SK-N-SH (cell line): ENCODE measurements at regions of chr7 and their contacts with region 1.

Region 1: DNA sequence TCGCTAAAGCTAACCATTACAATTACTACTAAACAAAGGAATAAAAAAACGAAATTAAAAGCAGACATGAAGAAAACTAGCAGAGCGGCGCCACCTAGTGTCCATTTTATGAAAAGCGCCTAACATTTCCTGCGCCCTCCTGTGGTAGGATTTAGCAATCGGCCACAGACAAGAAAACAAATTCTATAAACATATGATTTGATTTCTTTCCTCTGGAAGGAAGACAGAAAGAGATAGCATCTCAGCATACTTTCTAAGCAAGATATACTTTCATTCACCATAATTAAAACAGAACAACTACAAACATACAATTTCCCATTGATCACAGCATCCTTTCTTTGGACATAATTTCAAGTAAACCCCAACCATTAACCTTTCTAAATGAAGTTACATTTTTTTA is 337.7 kb upstream of the NPVF start:
- DNase-seq: peak; percentile 54
- H3K4me3 ChIP-seq: peak overlapping the region in 1 of 2 experiments; percentile 28; a peak in 1 of 4 replicates
- H3K27ac ChIP-seq: no peak overlapping the region
- H3K4me1 ChIP-seq: peaks cover 0 to 19% of the 10 kb centered on the region in 2 experiments; a peak in 2 of 4 replicates
- H3K27me3 ChIP-seq: no peaks in the 10 kb centered on the region
- CTCF ChIP-seq: peak; percentile 100
- EP300 ChIP-seq: no peak; a peak in 1 of 4 replicates
- RAD21 ChIP-seq: peak; percentile 100

Region 2: DNA sequence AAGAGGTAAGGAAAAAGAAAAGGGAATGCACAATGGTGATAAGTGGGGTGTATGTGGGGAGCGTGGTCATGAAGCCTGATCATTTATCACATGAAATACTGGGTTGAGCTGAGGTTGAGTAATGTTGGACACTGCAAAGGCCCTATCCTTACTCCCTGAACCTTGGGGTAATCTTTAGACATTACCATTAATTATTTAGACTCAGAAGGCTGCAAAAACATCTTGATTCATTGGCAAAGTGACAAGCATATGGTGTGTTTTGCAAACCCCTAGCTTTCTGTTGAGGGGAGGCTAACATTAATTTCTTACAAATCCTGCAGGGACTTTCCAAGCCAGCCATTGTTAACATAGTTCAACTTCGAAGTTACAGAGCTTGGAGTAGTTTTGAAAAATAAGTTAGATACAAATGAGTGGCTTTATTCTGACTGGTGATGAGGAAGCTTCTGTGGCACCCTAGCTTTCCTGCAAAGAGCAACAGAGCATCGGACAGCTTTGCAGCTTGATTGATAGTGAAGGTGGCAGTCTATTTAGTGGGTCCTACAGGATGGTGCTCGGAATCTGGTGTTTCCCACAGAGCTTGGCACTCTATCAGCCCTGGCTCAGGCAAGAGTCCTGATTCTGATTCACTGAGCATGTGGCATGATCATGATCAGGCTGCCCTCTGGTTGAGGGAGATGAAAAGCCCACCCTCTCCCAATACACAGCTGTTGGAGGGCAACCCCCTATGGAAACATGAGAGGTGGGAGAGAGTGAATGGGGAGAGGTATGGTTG is 183.9 kb before region 1 on chr7:
- CTCF ChIA-PET with region 1: interaction called, 766 read pairs
- POLR2A ChIA-PET with region 1: no interaction called
- DNase-seq: no peak
- H3K4me3 ChIP-seq: no peak overlapping the region
- H3K27ac ChIP-seq: no peak overlapping the region
- H3K4me1 ChIP-seq: peaks cover 0 to 10% of the 10 kb centered on the region in 2 experiments; a peak in 1 of 4 replicates
- H3K27me3 ChIP-seq: no peaks in the 10 kb centered on the region
- CTCF ChIP-seq: no peak
- EP300 ChIP-seq: no peak
- RAD21 ChIP-seq: no peak

Region 3: GRCh38 chr7:25424113-25424512 is 141.8 kb before region 1 on chr7:
- CTCF ChIA-PET with region 1: interaction called, 41 read pairs
- POLR2A ChIA-PET with region 1: no interaction called
- DNase-seq: no peak
- H3K4me3 ChIP-seq: no peak overlapping the region
- H3K27ac ChIP-seq: no peak overlapping the region
- H3K4me1 ChIP-seq: peaks cover 0 to 2% of the 10 kb centered on the region in 2 experiments; a peak in 1 of 4 replicates
- H3K27me3 ChIP-seq: no peaks in the 10 kb centered on the region
- CTCF ChIP-seq: no peak
- EP300 ChIP-seq: no peak
- RAD21 ChIP-seq: no peak

Region 4: GRCh38 chr7:25545124-25546008 is 20.6 kb before region 1 on chr7:
- CTCF ChIA-PET with region 1: interaction called, 110 read pairs
- POLR2A ChIA-PET with region 1: no interaction called
- DNase-seq: peak; percentile 65
- H3K4me3 ChIP-seq: no peak overlapping the region
- H3K27ac ChIP-seq: peak overlapping the region in 1 of 2 experiments; percentile 28; a peak in 2 of 4 replicates
- H3K4me1 ChIP-seq: peaks cover 0 to 15% of the 10 kb centered on the region in 2 experiments; a peak in 1 of 4 replicates
- H3K27me3 ChIP-seq: no peaks in the 10 kb centered on the region
- CTCF ChIP-seq: no peak
- EP300 ChIP-seq: no peak
- RAD21 ChIP-seq: no peak

Region 5: DNA sequence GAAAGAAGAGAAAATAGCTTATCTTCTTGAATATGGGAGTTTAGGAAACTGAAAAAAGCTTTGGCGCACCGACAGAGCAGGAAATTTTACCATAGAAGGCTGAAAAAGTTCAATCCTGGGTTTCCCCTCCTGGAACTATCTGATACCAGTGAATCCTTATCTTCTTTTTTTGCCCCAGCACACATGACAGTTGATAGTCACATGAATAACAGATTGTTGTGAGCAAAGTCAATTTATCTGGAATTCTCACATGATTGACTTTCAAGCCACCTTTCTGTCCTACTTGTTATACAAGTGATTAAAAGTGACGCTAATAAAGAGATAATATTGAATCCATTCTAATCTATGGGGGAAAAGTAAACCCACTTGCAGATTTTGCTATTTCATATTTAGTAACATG is 28.2 kb after region 1 on chr7:
- CTCF ChIA-PET with region 1: interaction called, 14 read pairs
- POLR2A ChIA-PET with region 1: no interaction called
- DNase-seq: no peak
- H3K4me3 ChIP-seq: no peak overlapping the region
- H3K27ac ChIP-seq: no peak overlapping the region
- H3K4me1 ChIP-seq: no peaks in the 10 kb centered on the region; a peak in 1 of 4 replicates
- H3K27me3 ChIP-seq: no peaks in the 10 kb centered on the region
- CTCF ChIP-seq: no peak
- EP300 ChIP-seq: no peak
- RAD21 ChIP-seq: no peak

Region 6: GRCh38 chr7:25669961-25670841 is 104.3 kb after region 1 on chr7:
- CTCF ChIA-PET with region 1: interaction called, 20 read pairs
- POLR2A ChIA-PET with region 1: no interaction called
- DNase-seq: no peak
- H3K4me3 ChIP-seq: no peak overlapping the region
- H3K27ac ChIP-seq: peak overlapping the region in 1 of 2 experiments; percentile 68; a peak in 2 of 4 replicates
- H3K4me1 ChIP-seq: peaks cover 0 to 45% of the 10 kb centered on the region in 2 experiments; a peak in 2 of 4 replicates
- H3K27me3 ChIP-seq: no peaks in the 10 kb centered on the region
- CTCF ChIP-seq: no peak
- EP300 ChIP-seq: no peak
- RAD21 ChIP-seq: no peak

Region 7: DNA sequence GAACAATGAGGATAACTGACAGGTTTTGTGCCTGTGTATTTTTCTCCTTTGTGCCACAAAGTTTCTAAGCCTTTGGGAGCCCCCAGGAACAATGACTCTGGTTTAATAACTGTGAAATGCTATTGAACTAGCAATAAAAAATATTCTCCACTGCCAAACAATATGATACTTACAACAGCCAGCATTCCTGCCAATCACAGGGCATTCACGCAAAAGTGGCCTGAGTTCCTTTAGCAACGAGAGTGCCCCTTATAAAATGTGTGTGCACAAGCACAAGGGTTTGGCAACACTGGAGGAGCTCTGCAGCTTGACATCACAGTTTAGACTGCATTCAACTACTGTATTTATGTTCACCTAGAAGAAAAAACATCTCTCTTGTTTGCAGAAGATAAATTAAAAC is 173.2 kb after region 1 on chr7:
- CTCF ChIA-PET with region 1: no interaction called
- POLR2A ChIA-PET with region 1: no interaction called
- DNase-seq: no peak
- H3K4me3 ChIP-seq: no peak overlapping the region
- H3K27ac ChIP-seq: no peak overlapping the region
- H3K4me1 ChIP-seq: peaks cover 0 to 6% of the 10 kb centered on the region in 2 experiments; a peak in 1 of 4 replicates
- H3K27me3 ChIP-seq: no peaks in the 10 kb centered on the region
- CTCF ChIP-seq: no peak
- EP300 ChIP-seq: no peak
- RAD21 ChIP-seq: no peak

Region 8: DNA sequence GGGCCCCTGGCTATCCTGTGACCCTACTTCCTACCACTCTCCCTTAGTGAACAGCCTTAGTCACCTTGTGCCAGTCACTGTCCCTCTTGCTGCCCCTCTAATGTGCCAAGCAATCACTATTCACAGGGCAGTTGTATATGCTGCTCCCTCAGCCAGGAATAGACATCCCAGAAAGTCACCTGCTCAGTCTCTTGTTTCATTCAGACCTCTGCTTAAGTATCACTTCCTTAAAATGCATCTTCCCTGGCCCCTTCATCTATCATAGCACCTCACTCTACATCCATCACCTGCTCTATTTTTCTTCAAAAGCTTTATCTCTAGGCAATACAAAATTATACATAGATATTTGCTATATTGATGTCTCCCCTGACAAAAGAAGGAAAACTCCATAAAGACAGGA is 257.6 kb after region 1 on chr7:
- CTCF ChIA-PET with region 1: no interaction called
- POLR2A ChIA-PET with region 1: no interaction called
- DNase-seq: no peak
- H3K4me3 ChIP-seq: no peak overlapping the region
- H3K27ac ChIP-seq: no peak overlapping the region
- H3K4me1 ChIP-seq: no peaks in the 10 kb centered on the region
- H3K27me3 ChIP-seq: no peaks in the 10 kb centered on the region
- CTCF ChIP-seq: no peak
- EP300 ChIP-seq: no peak
- RAD21 ChIP-seq: no peak